ENCODE measurements at regions of chr16 and their contacts with region 1.

Region 1: GRCh38 chr16:17578921-17579874 is 108.4 kb upstream of the XYLT1 start:
- DNase-seq: peak; percentile 59
- H3K4me3 ChIP-seq: no peak overlapping the region; the same call in 1 of the 2 replicates
- CTCF ChIP-seq: peak; percentile 88

Region 2: DNA sequence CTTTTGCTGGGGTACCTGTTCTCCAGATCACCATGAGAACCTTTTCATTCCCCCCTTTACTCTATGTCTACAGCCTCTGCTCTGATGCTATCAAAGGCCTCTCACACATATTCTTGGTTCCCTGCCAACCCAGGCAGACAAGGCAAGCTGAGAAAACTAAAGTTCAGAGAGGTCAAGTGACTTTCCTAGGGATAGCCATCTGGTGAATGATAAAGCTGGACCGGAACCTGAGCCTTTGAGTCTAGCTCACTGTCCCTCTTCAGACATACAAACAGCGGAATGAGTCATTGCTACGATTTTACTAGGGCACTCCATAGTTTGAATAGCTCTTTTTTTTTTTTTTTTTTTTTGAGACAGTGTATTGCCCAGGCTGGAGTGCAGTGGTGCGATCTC is 181.7 kb before region 1 on chr16:
- CTCF ChIA-PET with region 1: no interaction called
- POLR2A ChIA-PET with region 1: no interaction called
- DNase-seq: no peak
- H3K4me3 ChIP-seq: no peak overlapping the region
- CTCF ChIP-seq: no peak

Region 3: GRCh38 chr16:17476414-17477270 is 102.6 kb before region 1 on chr16:
- CTCF ChIA-PET with region 1: interaction called, 213 read pairs
- POLR2A ChIA-PET with region 1: no interaction called
- DNase-seq: no peak
- H3K4me3 ChIP-seq: no peak overlapping the region
- CTCF ChIP-seq: peak; percentile 67

Region 4: GRCh38 chr16:17511340-17511739 is 67.9 kb before region 1 on chr16:
- CTCF ChIA-PET with region 1: interaction called, 24 read pairs
- POLR2A ChIA-PET with region 1: no interaction called
- DNase-seq: peak; percentile 73
- H3K4me3 ChIP-seq: no peak overlapping the region
- CTCF ChIP-seq: no peak

Region 5: DNA sequence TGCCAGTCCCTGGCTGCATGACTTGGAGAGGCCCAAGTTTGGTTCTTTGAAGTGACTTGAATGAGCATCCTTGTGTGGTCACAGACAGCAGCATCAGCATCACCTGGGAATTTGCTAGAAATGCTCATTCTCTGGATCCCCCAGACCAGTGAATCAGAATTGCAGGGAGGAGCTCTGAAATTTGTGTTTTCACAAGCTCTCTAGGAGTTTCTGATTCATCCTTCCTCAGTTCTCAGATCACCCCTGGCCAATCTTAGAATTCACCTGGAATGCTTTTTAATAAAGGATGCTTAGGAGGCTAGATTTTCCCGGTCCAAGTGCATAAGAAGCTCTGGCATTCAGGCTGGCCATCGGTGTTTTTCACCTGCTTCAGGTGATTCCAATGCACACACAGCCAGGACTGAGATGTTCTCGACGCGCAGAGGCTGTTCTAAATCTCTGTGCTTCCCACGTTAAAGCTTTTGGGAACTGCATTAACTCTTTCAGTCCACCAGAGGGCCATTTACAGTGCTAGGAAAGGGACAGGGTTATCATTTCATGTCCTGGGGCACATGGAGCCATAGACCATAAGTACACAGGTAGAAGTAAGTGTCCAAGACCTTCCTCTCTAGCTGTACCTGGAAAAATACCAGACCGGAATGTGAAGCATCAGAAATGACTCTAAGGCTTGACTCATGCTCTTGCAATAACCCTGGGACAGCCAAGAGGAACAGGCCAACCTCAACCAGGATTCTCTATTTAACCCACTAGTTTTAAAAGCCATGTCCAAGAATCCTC is 22.7 kb before region 1 on chr16:
- CTCF ChIA-PET with region 1: interaction called, 154 read pairs
- POLR2A ChIA-PET with region 1: no interaction called
- DNase-seq: no peak
- H3K4me3 ChIP-seq: no peak overlapping the region
- CTCF ChIP-seq: peak; percentile 57

Region 6: GRCh38 chr16:17628983-17629382 is 49.8 kb after region 1 on chr16:
- CTCF ChIA-PET with region 1: no interaction called
- POLR2A ChIA-PET with region 1: no interaction called
- DNase-seq: no peak
- H3K4me3 ChIP-seq: no peak overlapping the region
- CTCF ChIP-seq: no peak

Region 7: DNA sequence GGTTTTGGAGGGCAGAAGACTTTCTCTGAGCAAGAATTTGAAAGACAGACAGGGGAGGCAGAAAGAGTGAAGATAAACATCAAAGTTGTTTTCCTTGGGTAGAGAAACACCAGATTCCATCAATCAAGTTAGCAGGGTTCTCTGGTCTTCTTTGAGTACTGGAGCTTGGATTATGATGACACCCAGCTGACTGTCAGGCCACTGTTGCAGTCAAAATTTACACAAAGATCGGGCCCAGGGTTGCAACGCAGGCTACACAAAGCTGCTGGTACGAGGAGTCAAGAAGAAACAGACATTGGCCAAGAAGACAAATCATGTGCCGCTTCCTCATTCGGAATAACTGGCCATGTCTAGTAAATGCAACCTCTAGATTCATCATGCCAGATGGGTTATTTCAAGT is 287.8 kb after region 1 on chr16:
- CTCF ChIA-PET with region 1: no interaction called
- POLR2A ChIA-PET with region 1: no interaction called
- DNase-seq: no peak
- H3K4me3 ChIP-seq: no peak overlapping the region
- CTCF ChIP-seq: no peak